ENCODE measurements at regions of chr2 and their contacts with region 1.

Region 1: GRCh38 chr2:156455451-156455901 is 19.3 kb downstream of the GPD2 start:
- DNase-seq: peak; percentile 92
- ATAC-seq: peak; percentile 92
- H3K4me3 ChIP-seq: peak overlapping the region; percentile 50; the same call in 1 of the 2 replicates
- H3K27ac ChIP-seq: peak overlapping the region; percentile 98
- H3K4me1 ChIP-seq: peaks cover 45% of the 10 kb centered on the region
- H3K27me3 ChIP-seq: no peaks in the 10 kb centered on the region
- CTCF ChIP-seq: no peak

Region 2: GRCh38 chr2:156400706-156401678 is 54.5 kb before region 1 on chr2:
- CTCF ChIA-PET with region 1: no interaction called
- POLR2A ChIA-PET with region 1: no interaction called
- intact Hi-C with region 1: loop called (anchors 1 kb)
- DNase-seq: peak; percentile 83
- ATAC-seq: peak; percentile 73
- H3K4me3 ChIP-seq: peak overlapping the region; percentile 74
- H3K27ac ChIP-seq: peak overlapping the region; percentile 91
- H3K4me1 ChIP-seq: peaks cover 21% of the 10 kb centered on the region
- H3K27me3 ChIP-seq: no peaks in the 10 kb centered on the region
- CTCF ChIP-seq: no peak

Region 3: GRCh38 chr2:156483741-156484176 is 28.3 kb after region 1 on chr2:
- CTCF ChIA-PET with region 1: no interaction called
- POLR2A ChIA-PET with region 1: no interaction called
- intact Hi-C with region 1: loop called (anchors 2 kb)
- DNase-seq: peak; percentile 53
- ATAC-seq: no peak; the same call in 1 of the 2 replicates
- H3K4me3 ChIP-seq: no peak overlapping the region
- H3K27ac ChIP-seq: peak overlapping the region; percentile 24; the same call in 1 of the 2 replicates
- H3K4me1 ChIP-seq: peaks cover 40% of the 10 kb centered on the region
- H3K27me3 ChIP-seq: no peaks in the 10 kb centered on the region
- CTCF ChIP-seq: no peak